ENCODE measurements at regions of chr12 and their contacts with region 1.

Region 1: DNA sequence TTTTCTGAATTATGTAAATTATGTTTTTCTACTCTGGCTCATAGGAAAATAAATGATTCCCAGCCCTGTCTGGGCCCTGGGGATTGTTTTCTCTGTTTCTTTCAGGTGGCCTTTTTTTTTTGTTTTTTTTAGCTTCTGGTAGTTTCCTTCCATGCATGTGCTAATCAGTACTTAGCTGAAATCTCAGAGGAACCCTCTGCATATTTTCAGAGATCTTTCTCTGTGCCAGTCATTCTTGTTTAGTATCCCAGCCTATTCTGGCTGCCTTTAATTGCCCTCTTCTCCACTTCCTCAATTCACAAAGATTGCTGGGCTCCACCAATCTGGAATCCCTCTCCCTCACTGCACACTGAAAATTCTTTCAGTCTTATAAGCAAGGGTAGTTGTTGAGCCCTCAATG is 46.9 kb downstream of the CNOT2 start:
- DNase-seq: no peak
- ATAC-seq: no peak
- H3K4me3 ChIP-seq: no peak overlapping the region
- H3K27ac ChIP-seq: no peak overlapping the region
- H3K4me1 ChIP-seq: no peaks in the 10 kb centered on the region
- H3K27me3 ChIP-seq: no peaks in the 10 kb centered on the region
- CTCF ChIP-seq: no peak
- POLR2A ChIP-seq: no peak
- RAD21 ChIP-seq: no peak

Region 2: DNA sequence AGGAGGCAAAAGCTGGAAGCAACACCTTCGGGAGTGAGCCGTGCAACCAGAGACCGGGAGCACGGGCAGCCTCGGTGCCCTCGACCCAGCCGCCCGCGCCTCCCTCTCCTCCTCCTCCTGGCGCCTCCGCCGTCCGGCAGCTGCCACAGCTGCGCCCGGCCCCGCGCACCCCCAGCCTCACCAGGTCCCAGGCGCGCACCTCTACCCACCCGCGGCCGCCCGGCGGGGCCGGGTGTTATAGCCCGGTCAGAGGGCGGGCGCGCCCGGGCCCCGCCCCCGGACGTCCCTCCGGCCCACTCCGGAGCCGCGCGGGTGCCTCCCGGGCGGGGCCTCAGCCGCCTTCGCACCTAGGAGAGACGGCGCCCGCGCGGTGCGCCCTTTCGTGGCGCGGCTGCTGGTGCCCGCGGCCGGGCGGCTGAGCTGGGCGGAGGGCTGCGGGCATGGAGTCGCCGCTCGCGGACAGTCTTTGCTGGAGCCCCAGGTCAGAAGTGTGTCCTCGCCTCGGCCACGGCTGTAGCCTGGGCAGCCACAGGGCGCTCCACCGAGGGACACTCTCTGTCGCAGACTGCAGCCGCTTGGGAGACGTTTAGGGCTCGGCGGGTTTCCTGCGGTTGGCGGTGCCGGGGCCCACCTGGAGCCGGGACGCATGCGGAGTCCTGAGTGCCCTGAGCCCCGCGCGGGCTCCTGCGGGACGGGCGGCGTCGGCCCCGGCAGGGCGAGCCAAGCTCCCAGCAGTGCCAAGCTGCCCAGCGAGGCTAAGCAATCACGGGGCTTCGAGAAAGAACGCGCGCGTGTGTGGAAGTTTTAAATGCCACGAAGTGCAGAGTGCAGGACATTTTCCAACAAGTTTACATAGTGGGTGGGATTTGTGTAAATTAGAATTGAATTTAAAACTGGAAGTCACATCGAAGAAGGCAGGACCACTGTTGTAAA is 1356.9 kb before region 1 on chr12 and contains the start of gene CPM:
- CTCF ChIA-PET with region 1: no interaction called
- POLR2A ChIA-PET with region 1: no interaction called
- dilution Hi-C with region 1: no loop called
- in situ Hi-C with region 1: no loop called
- intact Hi-C with region 1: no loop called
- DNase-seq: peak; percentile 25
- ATAC-seq: peak; percentile 99
- H3K4me3 ChIP-seq: peak within 1 kb of the TSS; percentile 58
- H3K27ac ChIP-seq: no peak within 1 kb of the TSS
- H3K4me1 ChIP-seq: no peaks in the 10 kb centered on the region
- H3K27me3 ChIP-seq: peaks cover 7% of the 10 kb centered on the region
- CTCF ChIP-seq: no peak
- POLR2A ChIP-seq: no peak
- RAD21 ChIP-seq: no peak
- total RNA-seq, gene CPM: 7.2 and 8.8 TPM in 2 replicates

Region 3: DNA sequence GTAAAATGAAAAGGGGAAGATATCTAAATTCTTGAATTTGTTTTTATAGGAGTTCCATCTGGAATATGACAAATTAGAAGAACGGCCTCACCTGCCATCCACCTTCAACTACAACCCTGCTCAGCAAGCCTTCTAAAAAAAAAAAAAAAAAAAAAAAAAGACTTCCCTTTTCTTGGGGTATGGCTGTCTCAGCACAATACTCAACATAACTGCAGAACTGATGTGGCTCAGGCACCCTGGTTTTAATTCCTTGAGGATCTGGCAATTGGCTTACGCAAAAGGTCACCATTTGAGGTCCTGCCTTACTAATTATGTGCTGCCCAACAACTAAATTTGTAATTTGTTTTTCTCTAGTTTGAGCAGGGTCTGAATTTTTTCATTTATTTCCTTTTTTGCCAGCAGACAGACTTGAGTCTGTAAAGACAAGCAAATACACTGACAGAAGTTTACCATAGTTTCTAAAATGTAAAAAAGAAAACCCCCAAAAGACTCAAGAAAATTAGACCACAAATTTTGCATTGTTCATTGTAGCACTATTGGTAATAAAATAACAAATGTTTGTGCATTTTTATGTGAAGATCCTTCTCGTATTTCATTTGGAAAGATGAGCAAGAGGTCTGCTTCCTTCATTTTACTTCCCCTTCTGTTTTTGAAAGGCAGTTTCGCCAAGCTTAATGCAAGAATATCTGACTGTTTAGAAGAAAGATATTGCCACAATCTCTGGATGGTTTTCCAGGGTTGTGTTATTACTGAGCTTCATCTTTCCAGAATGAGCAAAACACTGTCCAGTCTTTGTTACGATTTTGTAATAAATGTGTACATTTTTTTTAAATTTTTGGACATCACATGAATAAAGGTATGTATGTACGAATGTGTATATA is 63.9 kb after region 1 on chr12:
- CTCF ChIA-PET with region 1: no interaction called
- POLR2A ChIA-PET with region 1: interaction called, 15 read pairs
- dilution Hi-C with region 1: no loop called
- in situ Hi-C with region 1: no loop called
- intact Hi-C with region 1: no loop called
- DNase-seq: no peak
- ATAC-seq: no peak
- H3K4me3 ChIP-seq: no peak overlapping the region
- H3K27ac ChIP-seq: no peak overlapping the region
- H3K4me1 ChIP-seq: no peaks in the 10 kb centered on the region
- H3K27me3 ChIP-seq: no peaks in the 10 kb centered on the region
- CTCF ChIP-seq: no peak
- POLR2A ChIP-seq: no peak
- RAD21 ChIP-seq: no peak

Region 4: GRCh38 chr12:70590051-70590450 is 299.9 kb after region 1 on chr12:
- CTCF ChIA-PET with region 1: no interaction called
- POLR2A ChIA-PET with region 1: no interaction called
- dilution Hi-C with region 1: no loop called
- in situ Hi-C with region 1: no loop called
- intact Hi-C with region 1: no loop called
- DNase-seq: peak; percentile 77
- ATAC-seq: peak; percentile 94
- H3K4me3 ChIP-seq: no peak overlapping the region
- H3K27ac ChIP-seq: no peak overlapping the region
- H3K4me1 ChIP-seq: no peaks in the 10 kb centered on the region
- H3K27me3 ChIP-seq: no peaks in the 10 kb centered on the region
- CTCF ChIP-seq: peak; percentile 94
- POLR2A ChIP-seq: no peak
- RAD21 ChIP-seq: peak; percentile 93